ENCODE measurements at regions of chr4 and their contacts with region 1.

Region 1: DNA sequence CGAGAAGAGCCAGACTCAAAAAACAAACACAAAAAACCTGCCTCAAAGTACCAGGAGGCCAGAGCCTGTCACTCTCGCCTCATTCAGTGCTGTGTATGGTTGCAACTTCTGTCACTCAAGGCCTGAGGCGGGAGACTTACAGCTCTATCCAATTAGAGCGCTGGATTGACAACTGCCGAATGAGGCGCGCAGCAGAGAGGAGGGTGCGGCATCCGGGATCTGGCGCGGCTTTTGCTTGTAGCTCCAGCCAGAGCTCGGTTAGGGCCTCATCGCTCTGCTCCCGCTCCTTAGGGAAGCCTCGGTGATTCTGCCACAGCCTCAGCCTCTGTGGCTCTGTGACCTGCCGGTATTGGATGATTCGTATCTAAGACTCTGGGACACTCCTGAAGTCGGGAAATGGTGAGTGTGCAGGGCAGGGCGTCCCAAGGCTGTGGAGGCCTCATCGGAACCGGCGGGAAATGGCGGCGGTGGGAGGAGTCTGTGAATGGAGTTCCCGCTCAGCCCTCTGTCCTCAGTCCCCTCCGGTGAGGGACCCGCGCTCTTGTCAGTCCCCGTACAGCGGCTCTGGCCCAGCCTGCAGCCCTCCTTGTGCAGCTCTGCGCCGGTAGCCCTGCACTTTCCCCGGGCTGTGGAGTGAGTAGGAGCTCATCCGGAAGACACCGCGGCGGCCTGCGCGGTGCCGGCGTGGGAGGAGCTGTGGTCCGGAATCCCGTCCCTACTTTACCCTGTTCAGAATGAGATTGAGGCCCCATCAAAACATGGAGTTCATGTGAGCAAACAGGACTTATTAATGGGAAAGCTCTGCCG is at the start of gene ZNF718:
- DNase-seq: peak; percentile 78 to 97 (median 91)
- ATAC-seq: peak; percentile 95
- H3K4me3 ChIP-seq: peak within 1 kb of the TSS; percentile 78 to 96
- H3K4me3 Mint-ChIP-seq: peak within 1 kb of the TSS; percentile 99
- H3K27ac ChIP-seq: peak within 1 kb of the TSS; percentile 75 to 83
- H3K27ac Mint-ChIP-seq: peak within 1 kb of the TSS; percentile 99
- H3K4me1 ChIP-seq: peaks cover 29% of the 10 kb centered on the region
- H3K4me1 Mint-ChIP-seq: peaks cover 44% of the 10 kb centered on the region
- H3K27me3 ChIP-seq: no peaks in the 10 kb centered on the region
- H3K27me3 Mint-ChIP-seq: no peaks in the 10 kb centered on the region
- CTCF ChIP-seq: no peak
- total RNA-seq, gene ZNF718: 3.6 to 4.0 TPM

Region 2: GRCh38 chr4:138935-139334 is 14.5 kb after region 1 on chr4:
- CTCF ChIA-PET with region 1: no interaction called
- POLR2A ChIA-PET with region 1: interaction called, 16 read pairs
- intact Hi-C with region 1: loop called in 1 of 2 experiments (anchors 1 kb)
- DNase-seq: no peak
- ATAC-seq: no peak
- H3K4me3 ChIP-seq: no peak overlapping the region
- H3K4me3 Mint-ChIP-seq: no peak overlapping the region
- H3K27ac ChIP-seq: no peak overlapping the region
- H3K27ac Mint-ChIP-seq: no peak overlapping the region
- H3K4me1 ChIP-seq: no peaks in the 10 kb centered on the region
- H3K4me1 Mint-ChIP-seq: peaks cover 14% of the 10 kb centered on the region
- H3K27me3 ChIP-seq: no peaks in the 10 kb centered on the region
- H3K27me3 Mint-ChIP-seq: no peaks in the 10 kb centered on the region
- CTCF ChIP-seq: no peak

Region 3: DNA sequence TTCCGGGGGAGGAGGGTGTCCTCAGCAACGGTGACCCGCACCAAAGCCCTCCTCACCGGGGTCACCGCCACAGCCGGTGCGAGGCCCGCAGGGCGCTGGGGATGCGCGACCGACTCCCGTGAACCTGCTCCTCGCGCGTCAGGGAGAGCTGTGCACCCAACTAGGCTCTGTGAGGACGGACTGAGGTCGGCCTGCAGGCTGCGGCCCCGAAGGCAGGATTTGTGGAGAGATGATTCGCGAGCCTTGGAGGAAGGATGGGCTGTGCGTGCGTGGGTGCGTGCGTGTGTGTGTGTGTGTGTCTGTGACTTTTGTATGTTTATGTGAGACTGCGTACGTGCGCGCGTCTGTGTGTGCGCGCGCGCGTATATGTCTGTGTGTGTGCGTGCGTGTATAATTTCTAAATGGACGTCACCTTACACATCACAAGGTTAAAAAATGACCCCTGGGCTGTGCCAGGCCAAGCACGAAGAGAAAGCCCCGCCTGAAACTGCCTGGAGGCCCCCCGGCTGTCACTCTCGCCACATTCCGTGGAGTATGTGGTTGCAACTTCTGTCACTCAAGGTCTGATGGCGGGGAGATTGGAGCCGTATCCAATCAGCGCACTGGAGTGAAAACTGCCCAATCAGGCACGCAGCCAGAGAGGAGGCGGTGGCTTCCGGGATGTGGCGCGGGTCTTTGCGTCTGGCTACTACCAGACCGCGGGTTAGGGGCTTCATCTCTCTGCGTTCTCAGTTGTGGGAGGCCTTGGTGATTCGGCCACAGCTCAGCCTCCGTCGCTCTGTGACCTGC is 212.9 kb after region 1 on chr4 and contains the start of gene ZNF141:
- CTCF ChIA-PET with region 1: no interaction called
- POLR2A ChIA-PET with region 1: interaction called, 4 read pairs
- intact Hi-C with region 1: loop called (anchors 1 to 2 kb)
- DNase-seq: peak; percentile 84 to 97 (median 91)
- ATAC-seq: peak; percentile 88
- H3K4me3 ChIP-seq: peak within 1 kb of the TSS; percentile 94 to 95
- H3K4me3 Mint-ChIP-seq: peak within 1 kb of the TSS; percentile 99
- H3K27ac ChIP-seq: peak within 1 kb of the TSS; percentile 90 to 95
- H3K27ac Mint-ChIP-seq: peak within 1 kb of the TSS; percentile 99
- H3K4me1 ChIP-seq: peaks cover 17% of the 10 kb centered on the region
- H3K4me1 Mint-ChIP-seq: peaks cover 46% of the 10 kb centered on the region
- H3K27me3 ChIP-seq: no peaks in the 10 kb centered on the region
- H3K27me3 Mint-ChIP-seq: no peaks in the 10 kb centered on the region
- CTCF ChIP-seq: no peak
- total RNA-seq, gene ZNF141: 16.3 to 19.9 TPM

Measured in CD8-positive, alpha-beta T cell (primary cell).